Tibial artery (tissue), 4 donors: ENCODE measurements at regions of chr20 and their contacts with region 1.

Region 1: DNA sequence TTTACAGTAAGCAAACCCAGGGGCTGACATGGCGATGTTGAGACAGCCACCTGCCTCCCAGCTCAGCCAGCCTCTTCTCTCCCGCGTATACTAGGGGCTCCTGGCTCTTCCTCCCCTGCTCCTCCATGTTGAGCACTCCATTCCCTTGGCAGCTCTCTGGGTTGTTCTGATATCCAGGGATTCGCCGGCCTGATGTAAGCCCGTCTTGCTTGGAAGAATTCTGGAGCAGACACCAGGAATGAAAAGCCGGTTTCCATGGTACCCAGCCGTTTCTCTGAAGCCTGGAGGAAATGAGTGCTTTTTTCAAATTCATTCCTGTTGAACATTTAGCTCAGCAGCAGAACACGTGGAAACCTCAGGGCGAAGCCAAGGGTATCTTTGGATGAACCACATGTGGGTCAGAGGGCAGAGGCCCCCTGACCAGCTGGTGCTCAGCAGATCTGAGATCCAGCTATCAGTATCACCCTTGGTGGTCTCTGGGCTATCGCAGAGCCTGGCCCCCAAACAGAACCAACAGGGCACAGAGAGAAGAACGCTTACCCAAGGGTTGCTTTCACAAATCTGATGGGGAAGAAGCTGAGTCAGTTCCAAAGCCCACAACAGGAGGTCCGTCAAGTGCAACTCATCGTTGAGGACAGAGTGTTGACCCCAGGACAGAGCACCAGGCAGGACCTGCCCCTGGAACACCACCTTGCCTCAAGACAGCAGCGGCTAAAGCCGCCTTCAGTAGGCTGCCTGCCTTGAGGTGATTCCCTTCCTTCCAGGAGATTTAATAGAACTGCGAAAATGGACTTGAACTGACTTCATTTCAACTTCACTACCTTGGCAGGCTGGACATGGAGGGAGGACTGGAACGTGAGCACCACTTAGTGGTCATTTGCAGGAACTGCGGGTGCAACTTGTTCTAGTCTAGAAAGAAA is 96.1 kb upstream of the RIN2 start:
- DNase-seq: peak; percentile 73 to 81
- H3K4me3 ChIP-seq: peak overlapping the region in 1 of 2 donors; percentile 35
- H3K27ac ChIP-seq: no peak overlapping the region
- H3K4me1 ChIP-seq: peaks cover 0 to 14% (median 8%) of the 10 kb centered on the region in 4 donors
- H3K27me3 ChIP-seq: no peaks in the 10 kb centered on the region
- CTCF ChIP-seq: peak; percentile 92 to 100

Region 2: DNA sequence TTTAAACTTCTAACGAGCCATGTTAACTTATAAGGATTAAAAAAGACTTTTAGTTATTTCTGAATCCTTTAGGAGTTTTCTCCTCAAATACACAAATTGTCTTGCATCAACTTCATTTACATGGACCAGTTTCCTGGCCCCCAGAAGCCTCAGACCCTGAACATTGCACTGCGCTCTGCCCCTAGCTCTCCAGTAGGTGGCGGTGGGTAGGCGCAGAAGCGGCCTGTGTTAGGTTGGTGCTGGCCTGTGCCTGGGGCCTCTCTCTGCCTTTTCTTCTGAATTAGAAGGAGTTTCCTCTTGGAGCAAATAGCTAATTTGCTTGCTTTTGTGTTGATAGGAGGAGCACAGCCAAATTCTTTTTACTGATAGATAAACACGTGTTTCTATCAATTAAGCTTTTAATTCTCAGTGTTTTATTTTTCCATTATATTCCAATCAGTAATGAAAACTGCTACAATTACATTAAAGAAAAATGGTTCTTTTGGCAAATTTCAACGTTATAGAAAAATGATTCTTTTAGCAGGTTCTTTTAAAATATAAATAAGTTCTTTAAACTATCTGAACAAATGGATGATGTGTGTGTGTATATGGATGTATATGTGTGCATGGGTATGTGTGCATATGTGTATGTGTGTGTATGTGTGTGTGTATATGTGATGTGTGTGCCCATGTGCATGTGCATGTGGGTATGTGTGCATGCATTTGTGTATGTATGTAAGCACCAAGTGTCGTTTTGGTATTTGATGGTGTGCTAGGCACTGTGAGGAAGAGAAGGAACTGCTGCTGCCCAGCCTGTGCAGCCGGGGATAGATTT is 1029.6 kb before region 1 on chr20:
- intact Hi-C with region 1: loop called (anchors 10 kb)
- DNase-seq: peak in 1 of 2 donors; percentile 47
- H3K4me3 ChIP-seq: no peak overlapping the region
- H3K27ac ChIP-seq: no peak overlapping the region
- H3K4me1 ChIP-seq: no peaks in the 10 kb centered on the region
- H3K27me3 ChIP-seq: no peaks in the 10 kb centered on the region
- CTCF ChIP-seq: peak; percentile 71 to 72

Region 3: DNA sequence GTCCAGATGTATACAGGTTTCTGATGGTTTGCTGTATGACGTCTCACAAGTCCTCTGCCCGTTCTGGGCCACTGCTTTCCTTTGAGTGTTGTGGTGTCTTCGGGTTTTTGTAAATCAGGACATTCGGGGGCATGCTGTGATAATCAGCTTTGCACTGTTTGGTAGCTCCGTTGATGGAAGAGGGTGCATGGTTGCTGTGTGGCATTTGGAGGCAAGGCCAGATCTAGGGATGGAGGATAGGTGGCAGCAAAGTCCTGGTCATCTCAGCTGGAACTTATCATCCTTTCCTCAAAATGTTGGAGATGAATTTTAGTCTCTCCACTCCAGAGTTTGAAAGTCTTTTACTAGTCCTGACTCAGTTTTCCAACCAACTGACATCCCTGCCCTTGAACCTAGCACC is 757.4 kb before region 1 on chr20:
- intact Hi-C with region 1: loop called (anchors 10 kb)
- DNase-seq: peak in 1 of 2 donors; percentile 26
- H3K4me3 ChIP-seq: no peak overlapping the region
- H3K27ac ChIP-seq: no peak overlapping the region
- H3K4me1 ChIP-seq: no peaks in the 10 kb centered on the region
- H3K27me3 ChIP-seq: no peaks in the 10 kb centered on the region
- CTCF ChIP-seq: peak; percentile 38 to 41

Region 4: DNA sequence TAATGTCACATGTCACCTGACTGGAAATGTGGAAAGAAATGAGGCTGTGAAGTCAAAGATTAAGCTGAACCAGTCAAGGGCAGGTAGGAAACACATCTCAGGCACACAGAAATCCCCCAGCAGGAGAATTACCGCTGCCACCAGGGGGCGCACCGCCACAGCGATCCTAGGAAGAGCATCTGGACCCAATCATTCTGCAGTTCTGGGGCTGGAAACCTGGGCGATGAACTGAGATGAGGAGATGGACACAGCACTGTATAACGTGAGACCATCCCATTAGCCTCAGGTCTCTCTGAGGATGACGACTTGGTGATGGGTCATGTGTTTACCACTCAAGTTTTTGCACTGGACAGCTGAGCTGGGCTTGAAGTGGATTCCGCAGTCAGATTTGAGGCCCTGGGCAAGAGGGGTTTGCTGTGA is 456.0 kb before region 1 on chr20:
- intact Hi-C with region 1: loop called (anchors 5 kb)
- DNase-seq: peak; percentile 71 to 80
- H3K4me3 ChIP-seq: no peak overlapping the region
- H3K27ac ChIP-seq: no peak overlapping the region
- H3K4me1 ChIP-seq: peaks cover 0 to 11% (median 7%) of the 10 kb centered on the region in 4 donors
- H3K27me3 ChIP-seq: no peaks in the 10 kb centered on the region
- CTCF ChIP-seq: peak; percentile 87 to 91

Region 5: DNA sequence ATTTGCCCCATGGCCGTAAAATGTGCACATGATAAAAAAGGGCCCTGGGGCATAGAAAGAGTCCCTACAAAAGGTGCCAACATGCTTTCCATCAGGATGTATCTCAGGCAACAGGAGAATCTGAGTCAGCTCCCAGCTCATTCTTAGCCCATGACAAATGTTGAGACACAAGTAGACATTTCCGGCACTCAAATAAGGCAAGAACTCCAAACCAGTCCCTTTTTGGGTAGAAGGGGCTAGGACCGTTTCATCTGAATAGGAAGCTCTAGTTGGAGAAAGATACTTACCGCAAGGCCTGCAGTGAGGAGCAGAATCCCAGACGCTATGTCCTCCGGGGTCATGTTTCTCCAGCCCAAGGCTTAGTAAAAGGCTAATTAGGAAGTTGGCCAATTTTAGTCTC is 164.9 kb before region 1 on chr20:
- intact Hi-C with region 1: no loop called
- DNase-seq: no peak
- H3K4me3 ChIP-seq: no peak overlapping the region
- H3K27ac ChIP-seq: peak overlapping the region; percentile 75 to 81
- H3K4me1 ChIP-seq: peaks cover 0 to 67% (median 55%) of the 10 kb centered on the region in 4 donors
- H3K27me3 ChIP-seq: no peaks in the 10 kb centered on the region
- CTCF ChIP-seq: no peak

Region 6: DNA sequence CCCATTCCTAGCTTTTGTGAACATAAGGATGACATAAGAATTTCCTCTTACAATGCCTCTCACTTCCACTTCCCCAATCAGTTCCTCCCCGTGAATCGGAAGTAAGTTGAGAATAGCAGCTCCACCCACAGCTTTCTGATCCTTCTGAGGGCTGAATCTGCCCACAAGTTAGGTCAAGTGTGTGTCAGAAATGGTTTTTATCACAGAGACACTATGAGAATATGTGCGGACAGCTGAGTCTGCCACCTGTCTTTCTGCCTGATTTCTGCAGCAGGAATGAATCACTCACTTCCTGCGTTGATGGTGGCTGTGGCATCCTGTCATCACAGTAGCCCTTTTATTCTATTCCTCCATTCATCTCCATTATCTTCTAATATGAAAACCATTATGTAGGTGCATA is 166.3 kb after region 1 on chr20:
- intact Hi-C with region 1: no loop called
- DNase-seq: no peak
- H3K4me3 ChIP-seq: no peak overlapping the region
- H3K27ac ChIP-seq: no peak overlapping the region
- H3K4me1 ChIP-seq: peaks cover 0 to 4% (median 0%) of the 10 kb centered on the region in 4 donors
- H3K27me3 ChIP-seq: no peaks in the 10 kb centered on the region
- CTCF ChIP-seq: no peak